AG04449 (cell line): ENCODE measurements at regions of chr10 and their contacts with region 1.

Region 1: DNA sequence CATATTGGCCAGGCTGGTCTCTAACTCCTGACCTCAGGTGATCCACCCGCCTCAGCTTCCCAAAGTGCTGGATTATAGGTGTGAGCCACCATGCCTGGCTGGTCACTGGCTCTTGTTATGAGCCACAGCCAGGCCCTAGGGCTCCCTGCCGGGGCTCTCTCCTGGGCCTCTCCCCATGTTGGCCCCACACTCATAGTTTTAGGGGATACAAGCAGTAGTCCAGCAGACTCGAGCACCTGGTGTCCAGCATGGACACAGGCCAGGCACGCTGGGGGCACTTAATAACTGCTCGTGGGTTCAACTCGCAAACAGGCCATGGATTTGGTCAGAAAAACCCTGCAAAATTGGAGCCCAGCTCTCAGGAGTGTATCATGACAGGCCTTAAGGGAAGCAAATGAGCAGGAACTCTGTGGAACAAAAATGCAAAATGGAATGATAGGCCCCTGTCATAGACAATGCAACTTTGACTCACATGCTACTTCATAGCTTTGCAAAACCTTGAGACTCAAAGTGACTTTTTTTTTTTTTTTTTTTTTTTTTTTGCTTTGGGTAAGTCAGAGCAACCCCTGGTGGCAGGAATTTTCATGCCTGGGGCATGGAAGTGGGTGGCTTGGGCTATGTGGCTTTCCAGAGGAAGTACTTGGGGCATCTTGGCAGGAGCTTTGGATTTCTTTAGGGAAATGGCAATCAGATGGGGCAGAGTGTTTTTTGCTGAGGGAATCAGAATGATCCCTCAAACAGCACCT is 62.5 kb downstream of the TACC2 start:
- DNase-seq: peak; percentile 28
- H3K4me3 ChIP-seq: no peak overlapping the region
- CTCF ChIP-seq: peak; percentile 55

Region 2: GRCh38 chr10:122034149-122034756 is 17.2 kb before region 1 on chr10:
- CTCF ChIA-PET with region 1: interaction called, 12 read pairs
- POLR2A ChIA-PET with region 1: no interaction called
- DNase-seq: no peak
- H3K4me3 ChIP-seq: no peak overlapping the region
- CTCF ChIP-seq: no peak

Region 3: DNA sequence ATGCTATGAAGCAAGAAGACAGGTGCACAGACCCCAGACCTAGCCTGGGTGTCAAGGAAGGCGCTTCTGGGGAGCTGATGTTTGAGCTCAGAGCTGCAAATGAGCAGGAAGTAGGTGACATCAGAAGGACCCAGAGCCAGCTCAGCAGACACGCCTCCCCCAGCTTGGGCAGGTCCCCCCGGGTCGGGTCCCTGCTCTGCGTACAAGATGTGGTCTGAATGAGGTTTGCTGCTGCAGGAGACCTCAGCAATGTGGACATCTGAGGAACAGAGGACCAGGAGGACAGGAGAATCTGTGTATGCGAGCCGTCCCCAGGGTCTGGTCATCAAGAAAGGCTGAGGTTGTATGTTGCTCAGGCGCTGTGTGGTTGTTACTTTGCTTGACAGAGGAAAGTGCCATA is 10.6 kb before region 1 on chr10:
- CTCF ChIA-PET with region 1: interaction called, 30 read pairs
- POLR2A ChIA-PET with region 1: no interaction called
- DNase-seq: no peak
- H3K4me3 ChIP-seq: no peak overlapping the region
- CTCF ChIP-seq: no peak

Region 4: GRCh38 chr10:122062831-122063674 is 11.6 kb after region 1 on chr10:
- CTCF ChIA-PET with region 1: interaction called, 21 read pairs
- POLR2A ChIA-PET with region 1: no interaction called
- DNase-seq: no peak
- H3K4me3 ChIP-seq: no peak overlapping the region
- CTCF ChIP-seq: no peak

Region 5: GRCh38 chr10:122293961-122294380 is 242.5 kb after region 1 on chr10:
- CTCF ChIA-PET with region 1: no interaction called
- POLR2A ChIA-PET with region 1: no interaction called
- DNase-seq: no peak
- H3K4me3 ChIP-seq: no peak overlapping the region
- CTCF ChIP-seq: no peak